Activated naive CD4-positive, alpha-beta T cell treated with anti-CD3 and anti-CD28 coated beads, Interleukin-2, amount 10 ng/mL, durations not matched to agents 7 days and 5 days (primary cell): ENCODE measurements at regions of chr1 and their contacts with region 1.

Region 1: GRCh38 chr1:29197585-29197924 is 15.9 kb upstream of the SRSF4 start:
- DNase-seq: peak; percentile 69
- H3K4me3 Mint-ChIP-seq: no peak overlapping the region
- H3K27ac Mint-ChIP-seq: no peak overlapping the region
- H3K4me1 Mint-ChIP-seq: peaks cover 2% of the 10 kb centered on the region
- H3K27me3 Mint-ChIP-seq: no peaks in the 10 kb centered on the region

Region 2: DNA sequence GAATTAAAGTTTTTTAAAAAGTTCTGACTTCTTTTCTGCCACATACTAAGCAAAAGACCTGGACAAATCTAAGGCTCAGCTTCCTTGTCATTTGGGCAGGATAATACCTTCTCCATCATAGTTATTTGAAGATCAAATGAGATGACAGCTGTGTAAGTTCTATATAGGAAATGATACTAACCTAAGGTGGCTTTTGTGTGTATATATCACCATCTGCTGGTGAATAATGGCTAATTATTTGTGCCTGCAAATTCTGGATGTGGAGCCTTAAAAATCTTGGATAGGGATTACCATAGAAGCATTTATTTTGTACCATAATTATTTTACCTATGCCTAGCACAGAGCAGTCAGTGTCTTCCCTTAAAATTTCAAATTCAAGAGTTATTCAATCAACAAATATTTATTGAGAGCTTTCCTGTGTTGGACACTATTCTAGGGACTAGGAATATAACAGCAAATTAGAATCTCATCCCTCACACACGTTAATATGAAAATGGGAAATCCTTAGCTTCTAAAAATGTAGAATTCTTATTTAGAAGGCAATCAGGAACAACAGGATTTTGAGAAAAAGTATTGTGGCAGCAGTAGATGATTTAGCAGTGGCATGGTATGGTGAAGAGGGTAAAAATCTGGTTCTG is 163.6 kb before region 1 on chr1:
- CTCF ChIA-PET with region 1: interaction called, 48 read pairs
- DNase-seq: no peak
- H3K4me3 Mint-ChIP-seq: no peak overlapping the region
- H3K27ac Mint-ChIP-seq: no peak overlapping the region
- H3K4me1 Mint-ChIP-seq: peaks cover 3% of the 10 kb centered on the region
- H3K27me3 Mint-ChIP-seq: no peaks in the 10 kb centered on the region

Region 3: GRCh38 chr1:29120961-29121485 is 76.5 kb before region 1 on chr1:
- CTCF ChIA-PET with region 1: interaction called, 11 read pairs
- DNase-seq: peak; percentile 79
- H3K4me3 Mint-ChIP-seq: no peak overlapping the region
- H3K27ac Mint-ChIP-seq: no peak overlapping the region
- H3K4me1 Mint-ChIP-seq: peaks cover 14% of the 10 kb centered on the region
- H3K27me3 Mint-ChIP-seq: peaks cover 59% of the 10 kb centered on the region

Region 4: GRCh38 chr1:29181413-29182225 is 15.9 kb before region 1 on chr1 and contains the start of gene SRSF4:
- CTCF ChIA-PET with region 1: interaction called, 27 read pairs
- DNase-seq: peak; percentile 99
- H3K4me3 Mint-ChIP-seq: peak within 1 kb of the TSS; percentile 94
- H3K27ac Mint-ChIP-seq: peak within 1 kb of the TSS; percentile 95
- H3K4me1 Mint-ChIP-seq: peaks cover 51% of the 10 kb centered on the region
- H3K27me3 Mint-ChIP-seq: no peaks in the 10 kb centered on the region